Body of pancreas (tissue), 4 donors: ENCODE measurements at regions of chr11 and their contacts with region 1.

Region 1: DNA sequence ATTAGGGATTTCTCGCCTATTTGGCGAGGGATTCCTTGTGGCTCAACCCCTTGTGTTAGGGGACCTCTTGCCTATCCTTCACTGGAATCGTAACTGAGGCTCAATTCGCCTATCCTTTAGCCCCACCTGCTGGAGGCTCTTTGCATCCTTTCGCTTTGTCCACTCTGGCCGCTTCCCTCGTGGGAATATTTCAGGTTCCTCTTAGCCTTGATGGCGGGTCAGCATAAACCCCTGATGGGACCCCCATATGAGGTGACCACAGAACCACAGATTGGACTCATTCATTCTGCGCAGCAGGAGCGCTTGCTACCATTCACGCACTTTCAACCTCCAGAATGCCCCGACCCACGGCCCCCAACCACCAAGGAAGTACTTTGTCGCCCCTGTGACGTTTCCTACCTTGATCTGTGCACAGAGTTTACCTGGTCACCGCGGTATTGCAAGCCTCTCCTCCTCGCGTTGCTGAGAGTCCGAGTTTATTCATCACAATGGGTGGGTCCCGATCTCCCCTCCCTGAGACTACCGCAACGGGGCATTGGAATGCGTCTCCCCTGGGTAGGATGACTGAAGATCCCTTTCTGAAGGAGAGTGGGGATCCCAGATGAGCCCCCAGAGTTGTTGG is at the start of gene OR52N2:
- DNase-seq: peak; percentile 73 to 84 (median 78)
- ATAC-seq: peak; percentile 92
- H3K4me3 ChIP-seq: peak within 1 kb of the TSS in 1 of 2 donors; percentile 11
- H3K27ac ChIP-seq: no peak within 1 kb of the TSS
- H3K4me1 ChIP-seq: peaks cover 11% of the 10 kb centered on the region
- H3K27me3 ChIP-seq: peaks cover 0 to 3% of the 10 kb centered on the region in 2 donors
- CTCF ChIP-seq: peak; percentile 57 to 88 (median 83)
- POLR2A ChIP-seq: no peak
- total RNA-seq, gene OR52N2: not detected

Region 2: GRCh38 chr11:5489576-5490357 is 318.8 kb before region 1 on chr11:
- intact Hi-C with region 1: loop called (anchors 10 kb)
- DNase-seq: no peak
- ATAC-seq: no peak
- H3K4me3 ChIP-seq: no peak overlapping the region
- H3K27ac ChIP-seq: no peak overlapping the region
- H3K4me1 ChIP-seq: no peaks in the 10 kb centered on the region
- H3K27me3 ChIP-seq: no peaks in the 10 kb centered on the region
- CTCF ChIP-seq: no peak
- POLR2A ChIP-seq: no peak